Naive thymus-derived CD4-positive, alpha-beta T cell (primary cell): ENCODE measurements at regions of chr2 and their contacts with region 1.

Region 1: GRCh38 chr2:31170071-31170698 is 31.9 kb upstream of the GALNT14 start:
- DNase-seq: peak in 8 of 9 donors; percentile 3 to 49 (median 28)
- ATAC-seq: peak; percentile 78
- H3K4me3 ChIP-seq: no peak overlapping the region
- H3K4me3 Mint-ChIP-seq: no peak overlapping the region
- H3K27ac ChIP-seq: no peak overlapping the region
- H3K27ac Mint-ChIP-seq: peak overlapping the region in 1 of 9 donors; percentile 32
- H3K4me1 ChIP-seq: no peaks in the 10 kb centered on the region
- H3K4me1 Mint-ChIP-seq: peaks cover 0 to under 1% (median 0%) of the 10 kb centered on the region in 7 donors
- H3K27me3 ChIP-seq: no peaks in the 10 kb centered on the region
- H3K27me3 Mint-ChIP-seq: peaks cover 0 to 6% (median under 1%) of the 10 kb centered on the region in 5 donors

Region 2: DNA sequence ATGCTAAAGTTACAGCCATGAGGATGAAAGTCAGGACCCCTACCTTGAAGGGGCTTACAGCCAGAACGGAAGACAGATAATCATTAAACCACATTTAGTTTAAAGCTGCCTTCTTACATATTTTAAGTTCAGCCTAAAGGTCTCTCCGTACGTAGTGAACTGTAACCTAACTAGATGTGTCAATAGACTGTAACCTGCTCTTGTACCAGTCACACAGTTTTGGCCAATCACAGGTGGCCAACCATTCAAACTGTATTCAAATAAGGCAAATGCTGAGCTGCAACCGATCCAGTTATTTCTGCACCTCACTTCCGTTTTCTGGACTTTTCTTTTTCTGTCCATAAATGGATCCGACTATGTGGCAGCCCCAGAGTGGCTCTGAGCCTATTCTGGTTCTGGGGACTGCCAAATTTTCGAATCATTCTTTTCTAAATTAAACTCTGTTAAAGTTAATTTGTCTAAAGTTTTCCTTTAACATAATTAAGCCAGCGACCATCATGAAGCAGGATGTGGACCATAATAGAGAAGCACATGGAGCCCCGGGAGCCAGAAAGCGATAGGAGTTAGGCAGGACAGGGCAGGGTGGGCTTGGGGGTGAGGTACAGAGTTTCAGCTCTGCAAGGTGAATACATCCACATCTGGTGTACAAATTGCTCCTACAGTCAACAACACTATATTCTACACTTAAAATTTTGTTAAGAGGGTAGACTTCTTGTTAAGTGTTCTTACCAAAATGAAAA is 1071.7 kb before region 1 on chr2:
- CTCF ChIA-PET with region 1: no interaction called
- POLR2A ChIA-PET with region 1: no interaction called
- intact Hi-C with region 1: loop called in 1 of 2 experiments (anchors 5 kb)
- DNase-seq: no peak
- ATAC-seq: no peak
- H3K4me3 ChIP-seq: no peak overlapping the region
- H3K4me3 Mint-ChIP-seq: no peak overlapping the region
- H3K27ac ChIP-seq: no peak overlapping the region
- H3K27ac Mint-ChIP-seq: no peak overlapping the region
- H3K4me1 ChIP-seq: no peaks in the 10 kb centered on the region
- H3K4me1 Mint-ChIP-seq: no peaks in the 10 kb centered on the region
- H3K27me3 ChIP-seq: no peaks in the 10 kb centered on the region
- H3K27me3 Mint-ChIP-seq: peaks cover 12 to 40% (median 23%) of the 10 kb centered on the region in 5 donors

Region 3: GRCh38 chr2:30293303-30293921 is 876.8 kb before region 1 on chr2:
- CTCF ChIA-PET with region 1: no interaction called
- POLR2A ChIA-PET with region 1: no interaction called
- intact Hi-C with region 1: no loop called
- DNase-seq: no peak
- ATAC-seq: peak; percentile 55
- H3K4me3 ChIP-seq: no peak overlapping the region
- H3K4me3 Mint-ChIP-seq: no peak overlapping the region
- H3K27ac ChIP-seq: no peak overlapping the region
- H3K27ac Mint-ChIP-seq: peak overlapping the region in 2 of 9 donors; percentile 38 to 53
- H3K4me1 ChIP-seq: peaks cover 0 to 6% of the 10 kb centered on the region in 2 donors
- H3K4me1 Mint-ChIP-seq: peaks cover 6 to 32% (median 11%) of the 10 kb centered on the region in 7 donors
- H3K27me3 ChIP-seq: no peaks in the 10 kb centered on the region
- H3K27me3 Mint-ChIP-seq: no peaks in the 10 kb centered on the region